ENCODE measurements at regions of chr19 and their contacts with region 1.

Region 1: GRCh38 chr19:12716861-12717260 is 6.9 kb downstream of the TNPO2 start:
- DNase-seq: peak; percentile 79 to 81 (median 81)
- H3K4me3 ChIP-seq: no peak overlapping the region
- H3K27ac ChIP-seq: no peak overlapping the region
- H3K4me1 ChIP-seq: peaks cover 3 to 17% (median 17%) of the 10 kb centered on the region in 4 experiments
- H3K27me3 ChIP-seq: no peaks in the 10 kb centered on the region

Region 2: GRCh38 chr19:12665281-12665573 is 51.6 kb before region 1 on chr19:
- CTCF ChIA-PET with region 1: no interaction called
- POLR2A ChIA-PET with region 1: no interaction called
- DNase-seq: peak; percentile 85 to 96 (median 94)
- H3K4me3 ChIP-seq: peak overlapping the region in 6 of 7 experiments; percentile 79 to 95 (median 84)
- H3K27ac ChIP-seq: peak overlapping the region in 1 of 2 experiments; percentile 15
- H3K4me1 ChIP-seq: peaks cover 4 to 50% (median 43%) of the 10 kb centered on the region in 4 experiments
- H3K27me3 ChIP-seq: no peaks in the 10 kb centered on the region

Region 3: GRCh38 chr19:12705654-12706331 is 11.1 kb before region 1 on chr19:
- CTCF ChIA-PET with region 1: interaction called, 13 read pairs
- POLR2A ChIA-PET with region 1: no interaction called
- DNase-seq: no peak
- H3K4me3 ChIP-seq: no peak overlapping the region
- H3K27ac ChIP-seq: no peak overlapping the region
- H3K4me1 ChIP-seq: no peaks in the 10 kb centered on the region
- H3K27me3 ChIP-seq: no peaks in the 10 kb centered on the region

Region 4: GRCh38 chr19:12789904-12790619 is 73.2 kb after region 1 on chr19:
- CTCF ChIA-PET with region 1: interaction called, 40 read pairs
- POLR2A ChIA-PET with region 1: interaction called, 7 read pairs
- DNase-seq: peak; percentile 96 to 99 (median 97)
- H3K4me3 ChIP-seq: peak overlapping the region; percentile 41 to 99 (median 93)
- H3K27ac ChIP-seq: peak overlapping the region; percentile 94 to 96
- H3K4me1 ChIP-seq: peaks cover 19 to 76% (median 66%) of the 10 kb centered on the region in 4 experiments
- H3K27me3 ChIP-seq: no peaks in the 10 kb centered on the region

Region 5: DNA sequence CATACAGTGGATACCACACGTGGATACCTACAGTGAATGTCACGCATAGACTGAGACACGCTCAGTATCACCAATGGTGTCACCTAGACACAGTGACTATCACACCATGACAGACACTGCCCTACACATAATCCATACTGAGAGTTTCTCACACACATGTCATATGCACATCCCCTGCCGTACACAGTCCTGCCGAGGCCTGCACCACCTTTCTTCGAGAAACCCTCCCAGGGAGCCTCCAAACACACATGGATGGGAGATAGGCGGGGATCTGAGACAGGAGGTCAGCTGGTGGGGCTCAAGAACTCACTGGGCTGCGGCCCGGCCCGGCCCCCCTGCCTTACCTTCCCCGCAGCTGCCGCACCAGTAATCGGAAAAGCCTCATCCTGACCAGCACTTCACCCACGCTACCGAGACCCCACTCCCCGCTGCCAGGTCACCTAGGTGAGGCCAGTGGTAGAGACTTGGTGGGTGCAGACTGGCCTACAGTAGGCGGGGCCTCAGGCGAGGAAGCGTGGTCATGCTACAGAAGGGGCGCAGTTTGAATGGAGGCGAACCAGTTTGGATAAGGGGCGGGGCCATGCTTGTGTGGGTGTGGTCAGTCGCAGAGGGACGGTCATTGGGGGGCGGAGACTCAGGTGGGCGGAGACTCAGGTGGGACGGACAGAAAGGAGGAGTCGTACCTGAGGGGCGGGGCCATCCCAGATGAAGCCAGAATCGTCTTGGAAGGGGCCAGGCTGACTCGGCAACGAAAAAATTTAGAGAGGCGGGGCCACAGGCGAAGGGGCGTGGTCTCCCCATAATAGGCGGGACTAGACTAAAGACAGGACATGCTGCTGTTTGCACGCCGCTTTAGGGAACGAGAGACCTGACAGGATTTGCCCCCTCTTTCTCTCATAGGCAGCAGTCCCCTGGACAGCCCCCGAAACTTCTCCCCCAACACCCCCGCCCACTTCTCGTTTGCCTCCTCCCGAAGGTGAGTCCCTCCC is 123.5 kb after region 1 on chr19:
- CTCF ChIA-PET with region 1: no interaction called
- POLR2A ChIA-PET with region 1: no interaction called
- DNase-seq: peak; percentile 69 to 77 (median 75)
- H3K4me3 ChIP-seq: peak overlapping the region in 5 of 7 experiments; percentile 28 to 55 (median 51)
- H3K27ac ChIP-seq: no peak overlapping the region
- H3K4me1 ChIP-seq: peaks cover 2 to 26% (median 17%) of the 10 kb centered on the region in 4 experiments
- H3K27me3 ChIP-seq: peaks cover 17 to 79% (median 32%) of the 10 kb centered on the region in 5 experiments